ENCODE measurements at regions of chr3 and their contacts with region 1.

Region 1: GRCh38 chr3:131794766-131795388 is 239.9 kb downstream of the CPNE4 start:
- DNase-seq: peak; percentile 44
- CTCF ChIP-seq: peak; percentile 83

Region 2: GRCh38 chr3:131549340-131549739 is 245.5 kb before region 1 on chr3:
- CTCF ChIA-PET with region 1: interaction called, 10 read pairs
- POLR2A ChIA-PET with region 1: no interaction called
- DNase-seq: no peak
- CTCF ChIP-seq: peak; percentile 59

Region 3: GRCh38 chr3:131762981-131763564 is 31.8 kb before region 1 on chr3:
- CTCF ChIA-PET with region 1: interaction called, 33 read pairs
- POLR2A ChIA-PET with region 1: no interaction called
- DNase-seq: no peak
- CTCF ChIP-seq: no peak

Region 4: DNA sequence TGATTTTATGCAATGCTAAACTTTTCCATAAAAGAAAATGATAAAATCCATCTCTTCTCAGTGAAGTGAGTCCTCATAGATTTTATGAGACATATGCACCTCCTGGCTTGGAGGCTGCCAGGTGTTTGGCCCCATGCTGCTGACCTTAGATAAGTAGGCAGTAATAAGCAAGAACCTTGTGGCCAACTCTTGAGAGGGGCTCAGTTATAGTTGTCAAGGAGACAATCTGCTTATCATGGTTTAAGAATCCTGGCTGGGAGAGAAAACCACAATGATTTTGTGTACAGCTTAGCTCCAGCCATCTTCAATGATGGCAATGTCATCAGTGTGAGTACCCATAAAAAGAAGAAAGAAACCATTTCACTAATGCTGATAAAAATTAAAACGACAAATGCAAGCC is 12.1 kb before region 1 on chr3:
- CTCF ChIA-PET with region 1: interaction called, 15 read pairs
- POLR2A ChIA-PET with region 1: no interaction called
- DNase-seq: no peak
- CTCF ChIP-seq: no peak

Region 5: DNA sequence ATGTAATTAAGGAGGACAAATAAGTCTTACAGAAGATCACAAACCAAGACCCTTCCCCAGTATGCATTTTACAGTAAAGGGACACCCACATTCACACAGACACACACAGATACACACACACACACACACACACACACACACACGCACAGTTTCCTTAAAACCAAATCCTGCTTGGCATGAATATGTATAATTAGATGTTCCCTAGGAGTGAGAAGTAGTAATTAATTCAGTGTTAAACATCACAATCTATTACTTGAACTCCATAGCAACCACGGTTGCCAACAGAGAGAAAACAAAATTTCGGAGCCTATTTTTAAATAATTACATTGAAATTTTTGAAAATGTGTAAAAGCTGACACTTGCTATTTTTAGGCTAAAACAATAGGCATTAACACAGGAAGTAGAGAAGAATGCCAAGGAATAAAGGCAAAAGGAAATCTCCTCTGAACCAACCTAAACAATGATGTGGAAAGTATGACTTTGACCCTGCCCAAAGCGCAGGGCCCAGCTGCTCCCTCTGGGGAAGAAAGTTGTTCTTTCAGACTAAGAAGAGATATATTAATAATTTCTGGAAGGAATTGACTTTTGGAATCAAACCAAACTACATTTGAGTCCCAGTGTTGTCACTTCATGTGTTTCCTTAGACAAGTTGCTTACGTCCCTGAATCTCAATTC is 24.6 kb after region 1 on chr3:
- CTCF ChIA-PET with region 1: interaction called, 10 read pairs
- POLR2A ChIA-PET with region 1: no interaction called
- DNase-seq: no peak
- CTCF ChIP-seq: no peak

Region 6: DNA sequence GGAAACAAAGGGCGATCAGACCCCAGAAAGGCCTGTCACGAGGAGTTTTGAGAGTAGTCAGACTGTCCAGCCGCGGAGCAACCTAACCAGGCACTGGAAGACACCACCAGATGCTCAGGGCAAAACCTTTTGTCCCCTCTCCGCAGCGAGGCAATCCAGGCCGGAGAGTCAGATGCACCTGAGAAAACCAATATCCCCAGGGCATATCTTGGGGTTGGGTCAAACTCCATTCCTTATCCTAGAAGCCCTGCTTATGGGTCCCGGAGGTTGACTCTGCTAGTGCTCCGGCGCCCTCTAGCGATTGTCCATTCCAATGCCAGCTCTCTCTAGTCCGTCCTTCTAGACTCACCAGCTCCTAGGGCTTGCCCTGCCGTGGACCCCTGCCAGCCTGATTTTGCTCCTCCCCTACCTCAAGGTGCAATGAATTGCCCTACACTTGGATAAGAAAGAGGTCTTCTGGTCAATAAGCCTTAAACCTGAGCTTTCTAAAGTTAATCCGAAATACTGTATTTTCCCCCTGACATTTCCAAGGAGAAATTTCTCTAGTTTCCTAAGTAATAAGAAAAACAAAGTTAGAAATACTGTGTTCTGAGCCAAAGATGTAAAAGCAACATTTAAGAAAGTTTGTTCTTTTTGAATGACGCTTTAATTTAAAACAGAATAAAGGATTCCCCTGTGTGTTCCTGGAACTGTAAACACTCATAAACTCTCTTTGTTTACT is 234.5 kb after region 1 on chr3:
- CTCF ChIA-PET with region 1: interaction called, 36 read pairs
- POLR2A ChIA-PET with region 1: no interaction called
- DNase-seq: peak; percentile 73
- CTCF ChIP-seq: peak; percentile 83

Region 7: GRCh38 chr3:132034486-132035464 is 239.9 kb after region 1 on chr3 and contains the start of gene CPNE4:
- CTCF ChIA-PET with region 1: interaction called, 36 read pairs
- POLR2A ChIA-PET with region 1: no interaction called
- DNase-seq: peak; percentile 85
- CTCF ChIP-seq: peak; percentile 50

Region 8: DNA sequence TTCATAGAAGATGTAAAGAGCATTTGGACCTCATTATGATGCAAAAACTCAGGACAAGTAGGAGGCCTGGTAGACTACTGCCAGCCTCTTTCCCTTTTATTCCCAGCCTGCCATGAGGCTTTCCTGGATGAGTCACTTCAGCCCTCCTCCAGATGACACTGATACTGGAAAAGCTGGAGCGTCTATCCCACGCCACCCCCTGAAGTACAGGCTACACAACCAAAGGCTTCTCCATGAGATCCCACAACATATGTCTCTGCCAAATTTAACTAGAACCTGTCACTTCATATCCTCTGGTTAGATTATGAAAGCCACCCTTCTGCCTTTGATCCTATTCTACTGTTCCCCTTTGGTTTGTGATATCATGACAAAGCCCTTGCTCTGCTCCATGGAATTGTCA is 296.0 kb after region 1 on chr3:
- CTCF ChIA-PET with region 1: no interaction called
- POLR2A ChIA-PET with region 1: no interaction called
- DNase-seq: no peak
- CTCF ChIP-seq: no peak